GM10248 (cell line): ENCODE measurements at regions of chr12 and their contacts with region 1.

Region 1: DNA sequence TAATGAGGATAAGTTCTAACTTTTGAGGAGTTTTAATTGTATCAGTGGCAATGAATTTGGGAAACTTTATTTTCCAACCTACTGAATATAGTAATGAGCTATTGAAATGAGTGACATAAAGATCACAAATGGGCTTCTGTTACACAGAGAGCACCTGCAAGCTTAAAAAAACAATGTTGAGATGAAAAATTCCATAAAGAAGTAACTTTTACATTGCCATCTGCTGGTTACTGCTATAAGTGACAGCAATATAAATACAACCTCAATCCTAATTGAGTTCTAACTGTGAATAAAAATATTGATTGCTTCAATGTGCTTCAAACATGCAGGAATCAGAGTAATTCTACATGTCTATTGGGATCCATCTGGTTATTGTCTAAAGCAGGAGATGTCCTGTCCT is 14.2 kb downstream of the WIF1 start:
- DNase-seq: peak; percentile 13
- CTCF ChIP-seq: peak; percentile 21

Region 2: DNA sequence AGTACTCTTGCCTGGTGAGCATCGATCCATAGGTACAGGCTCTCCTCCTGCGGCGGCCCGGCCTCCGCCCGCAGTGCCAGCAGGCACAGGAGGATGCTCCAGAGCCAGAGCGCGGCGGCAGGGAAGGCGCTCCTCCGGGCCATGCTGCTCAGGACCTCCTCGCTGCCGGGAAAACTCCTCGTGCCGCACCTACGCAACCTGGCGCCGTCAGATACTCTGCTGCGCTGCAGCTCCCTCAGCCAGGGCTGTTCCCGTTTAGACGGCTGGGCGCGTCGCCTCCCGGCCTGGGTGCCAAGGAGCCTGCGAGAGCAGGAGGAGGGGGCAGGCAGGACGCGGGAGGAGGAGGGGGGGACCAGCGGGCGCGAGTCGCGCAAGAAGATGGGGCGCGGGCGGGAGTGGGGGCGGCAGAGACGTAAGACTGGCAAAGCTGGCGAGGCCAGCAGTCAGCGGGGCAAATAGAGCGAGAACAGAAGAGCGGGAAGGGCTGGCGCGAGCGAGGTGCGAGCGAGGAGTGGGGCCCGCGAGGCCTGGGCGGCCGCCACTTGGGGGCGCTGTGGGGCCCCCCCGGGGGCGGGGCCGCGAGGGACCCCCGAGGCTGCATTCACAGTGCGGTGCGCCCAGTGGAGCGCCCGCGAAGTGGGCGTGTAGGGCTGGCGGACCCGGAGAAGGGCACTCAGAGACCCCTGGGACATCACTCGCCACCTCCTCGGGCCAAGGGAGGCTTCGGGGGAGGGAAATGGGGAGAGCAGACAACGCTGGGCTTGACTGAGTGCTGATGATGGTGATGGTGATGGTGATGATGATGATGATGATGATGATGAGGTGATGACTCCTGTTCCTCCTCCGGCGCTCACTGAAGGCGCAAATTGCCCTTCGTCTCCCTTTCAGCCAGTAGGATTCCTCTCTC is 14.4 kb after region 1 on chr12 and contains the start of gene WIF1:
- CTCF ChIA-PET with region 1: interaction called, 17 read pairs
- POLR2A ChIA-PET with region 1: no interaction called
- DNase-seq: peak; percentile 38
- CTCF ChIP-seq: peak; percentile 45

Region 3: DNA sequence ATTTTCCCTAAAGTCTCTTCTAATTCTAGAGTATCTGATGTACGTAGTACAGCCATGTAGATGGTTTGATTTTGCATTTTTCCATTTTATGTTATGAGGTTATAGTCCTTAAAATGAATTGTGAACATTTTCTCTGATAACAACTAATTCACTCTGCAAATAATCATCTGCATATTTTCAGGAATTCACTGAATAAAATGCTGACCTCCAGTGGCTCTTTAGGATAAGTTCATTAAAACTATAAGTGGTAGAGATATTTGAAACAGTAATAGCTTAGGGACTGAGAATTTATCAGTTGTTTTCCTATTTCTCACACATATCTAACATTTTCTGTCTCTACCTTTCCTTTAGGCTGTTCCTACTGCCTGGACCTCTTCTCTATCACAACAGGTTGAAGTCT is 175.9 kb after region 1 on chr12:
- CTCF ChIA-PET with region 1: no interaction called
- POLR2A ChIA-PET with region 1: no interaction called
- DNase-seq: no peak
- CTCF ChIP-seq: no peak